Activated CD4-positive, alpha-beta T cell treated with anti-CD3 and anti-CD28 coated beads for 36 hours (primary cell): ENCODE measurements at regions of chr22 and their contacts with region 1.

Region 1: GRCh38 chr22:49767355-49768062 is 60.2 kb downstream of the BRD1 start:
- DNase-seq: peak; percentile 51
- ATAC-seq: peak; percentile 68
- H3K4me3 Mint-ChIP-seq: no peak overlapping the region
- H3K27ac Mint-ChIP-seq: no peak overlapping the region
- H3K4me1 Mint-ChIP-seq: peaks cover 8% of the 10 kb centered on the region
- H3K27me3 Mint-ChIP-seq: no peaks in the 10 kb centered on the region

Region 2: DNA sequence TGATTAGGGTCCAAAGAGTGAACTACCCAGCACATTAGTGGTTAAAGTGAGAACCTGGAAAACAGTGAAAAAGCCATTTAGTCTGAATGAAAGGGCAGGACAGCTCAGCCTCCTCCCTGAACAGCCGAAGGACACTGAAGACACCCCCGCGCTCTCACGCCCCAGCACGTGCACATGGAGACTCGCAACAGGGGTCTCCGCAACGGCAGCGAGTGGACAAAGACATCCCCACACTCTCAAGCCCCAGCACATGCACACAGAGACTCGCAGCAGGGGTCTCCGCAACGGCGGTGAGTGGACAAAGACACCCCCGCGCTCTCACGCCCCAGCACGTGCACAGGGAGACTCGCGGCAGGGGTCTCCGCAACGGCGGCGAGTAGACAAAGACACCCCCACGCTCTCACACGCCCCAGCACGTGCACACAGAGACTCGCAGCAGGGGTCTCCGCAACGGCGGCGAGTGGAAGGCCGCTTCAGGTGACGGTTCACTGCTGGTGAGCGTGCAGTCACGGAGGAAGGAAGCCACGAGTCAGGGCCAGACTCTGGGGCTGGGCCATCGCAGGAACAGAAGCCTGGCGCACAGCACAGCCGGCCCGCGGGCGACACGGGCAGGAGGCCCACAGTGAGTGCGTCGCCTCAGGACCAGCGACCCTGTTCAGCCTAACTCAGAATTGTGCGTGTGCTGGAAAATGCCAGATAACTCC is 16.6 kb after region 1 on chr22:
- CTCF ChIA-PET with region 1: no interaction called
- POLR2A ChIA-PET with region 1: no interaction called
- intact Hi-C with region 1: no loop called
- DNase-seq: no peak
- ATAC-seq: no peak
- H3K4me3 Mint-ChIP-seq: no peak overlapping the region
- H3K27ac Mint-ChIP-seq: no peak overlapping the region
- H3K4me1 Mint-ChIP-seq: peaks cover 24% of the 10 kb centered on the region
- H3K27me3 Mint-ChIP-seq: no peaks in the 10 kb centered on the region

Region 3: GRCh38 chr22:49894322-49895054 is 127.0 kb after region 1 on chr22:
- CTCF ChIA-PET with region 1: interaction called, 12 read pairs
- POLR2A ChIA-PET with region 1: no interaction called
- intact Hi-C with region 1: no loop called
- DNase-seq: no peak
- ATAC-seq: no peak
- H3K4me3 Mint-ChIP-seq: no peak overlapping the region
- H3K27ac Mint-ChIP-seq: no peak overlapping the region
- H3K4me1 Mint-ChIP-seq: no peaks in the 10 kb centered on the region
- H3K27me3 Mint-ChIP-seq: no peaks in the 10 kb centered on the region

Region 4: DNA sequence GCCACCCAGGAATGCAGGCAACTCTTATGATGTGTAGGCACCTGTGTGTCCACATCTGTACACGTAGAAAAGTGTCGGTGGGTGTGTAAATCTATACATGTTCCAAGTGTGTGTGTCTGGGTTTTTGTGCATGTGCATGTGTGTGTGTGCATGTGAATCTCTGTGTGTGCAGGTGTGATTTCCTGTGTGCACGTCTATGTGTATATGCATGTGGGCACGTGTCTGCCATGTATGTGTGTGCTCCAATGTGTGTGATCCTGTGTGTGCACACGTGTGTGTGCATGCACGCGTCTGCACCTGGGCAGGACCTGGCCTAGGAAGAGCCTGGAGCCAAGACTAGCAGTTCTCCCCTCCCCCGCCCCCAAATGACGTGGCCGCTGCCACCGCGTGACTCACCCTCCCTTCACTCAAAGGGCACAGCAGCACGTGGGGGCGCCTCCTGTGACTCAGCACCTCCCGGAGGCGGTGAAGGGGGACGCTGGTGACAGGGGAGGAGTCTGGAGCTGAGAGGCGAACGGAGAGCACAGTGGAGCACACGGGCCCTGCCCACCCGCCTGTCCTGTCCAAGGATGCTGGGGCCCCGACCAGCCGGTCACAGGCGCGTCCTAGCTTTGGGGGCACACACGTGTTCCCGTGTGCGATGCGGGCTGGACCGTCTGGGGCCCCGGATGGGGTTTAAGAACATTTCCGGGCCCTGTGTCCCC is 203.2 kb after region 1 on chr22:
- CTCF ChIA-PET with region 1: no interaction called
- POLR2A ChIA-PET with region 1: no interaction called
- intact Hi-C with region 1: loop called in 1 of 2 experiments (anchors 5 kb)
- DNase-seq: peak; percentile 99
- ATAC-seq: peak; percentile 87
- H3K4me3 Mint-ChIP-seq: no peak overlapping the region
- H3K27ac Mint-ChIP-seq: peak overlapping the region; percentile 93
- H3K4me1 Mint-ChIP-seq: peaks cover 38% of the 10 kb centered on the region
- H3K27me3 Mint-ChIP-seq: no peaks in the 10 kb centered on the region

Region 5: DNA sequence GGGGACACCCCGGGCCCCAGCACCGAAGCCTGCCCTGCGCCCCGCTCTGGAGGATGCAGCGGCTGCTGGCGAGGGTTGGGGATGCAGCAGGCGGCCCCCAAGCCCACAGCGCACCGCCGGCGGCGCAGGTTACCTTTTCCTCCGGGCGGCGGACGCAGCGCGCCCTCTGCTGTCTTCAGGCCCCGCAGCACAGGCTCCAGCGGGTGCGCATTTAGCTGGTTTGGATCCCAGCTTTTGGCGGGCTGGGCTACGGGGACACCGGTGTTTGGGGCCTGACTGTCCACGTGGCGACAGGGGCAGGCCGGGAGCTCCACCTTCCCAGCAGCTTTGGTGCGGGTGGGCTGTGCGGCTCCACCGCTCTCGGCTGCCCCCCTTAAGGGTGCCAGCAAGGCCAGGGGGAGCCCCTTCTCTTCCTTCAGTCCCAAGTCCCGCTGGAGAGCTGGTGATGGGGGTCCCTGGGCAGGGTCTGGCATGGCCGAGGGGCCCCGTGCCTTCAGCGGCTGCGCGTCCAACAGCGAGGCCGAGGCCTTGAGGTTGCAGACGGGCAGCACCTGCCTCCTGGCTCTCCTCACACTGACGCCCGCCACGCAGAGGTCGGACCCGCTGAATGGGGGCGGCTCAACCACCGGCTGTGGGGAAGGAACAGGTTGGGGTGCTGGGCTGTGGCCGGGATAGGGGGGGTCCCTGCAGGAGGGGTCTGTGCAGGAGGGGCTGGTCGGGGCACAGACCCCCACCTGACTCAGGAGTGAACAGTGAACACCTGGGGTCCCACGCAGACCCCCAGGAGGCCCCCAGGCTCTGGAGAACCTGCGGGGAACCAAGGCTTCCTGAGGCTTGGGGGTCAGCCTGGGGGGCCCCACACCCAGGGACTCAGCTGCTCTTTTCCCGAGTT is 263.0 kb after region 1 on chr22:
- CTCF ChIA-PET with region 1: interaction called, 8 read pairs
- POLR2A ChIA-PET with region 1: interaction called, 6 read pairs
- intact Hi-C with region 1: loop called (anchors 1 to 5 kb)
- DNase-seq: peak; percentile 95
- ATAC-seq: peak; percentile 93
- H3K4me3 Mint-ChIP-seq: no peak overlapping the region
- H3K27ac Mint-ChIP-seq: no peak overlapping the region
- H3K4me1 Mint-ChIP-seq: peaks cover 22% of the 10 kb centered on the region
- H3K27me3 Mint-ChIP-seq: peaks cover 7% of the 10 kb centered on the region